PC-9 (cell line): ENCODE measurements at regions of chr7 and their contacts with region 1.

Region 1: DNA sequence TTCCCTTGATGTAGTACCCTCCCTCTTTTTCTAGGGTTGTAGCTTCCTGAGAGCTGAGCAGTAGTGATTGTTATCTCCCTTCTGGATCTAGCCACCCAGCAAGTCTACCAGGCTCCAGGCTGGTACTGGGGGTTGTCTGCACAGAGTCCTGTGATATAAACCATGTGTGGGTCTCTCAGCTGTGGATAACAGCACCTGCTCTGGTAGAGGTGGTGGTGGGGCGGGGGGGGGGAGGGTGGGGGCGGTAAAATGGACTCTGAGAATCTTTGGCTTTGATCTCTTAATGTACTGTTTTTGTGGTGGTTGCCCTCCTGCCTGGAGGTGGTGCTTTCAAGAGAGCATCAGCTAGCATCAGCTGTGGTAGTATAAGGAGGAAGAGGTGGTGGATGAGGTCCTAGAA is 302.0 kb upstream of the CHRM2 start:
- DNase-seq: no peak
- H3K4me3 ChIP-seq: no peak overlapping the region
- H3K27ac ChIP-seq: no peak overlapping the region
- H3K4me1 ChIP-seq: no peaks in the 10 kb centered on the region
- H3K27me3 ChIP-seq: no peaks in the 10 kb centered on the region
- CTCF ChIP-seq: no peak

Region 2: DNA sequence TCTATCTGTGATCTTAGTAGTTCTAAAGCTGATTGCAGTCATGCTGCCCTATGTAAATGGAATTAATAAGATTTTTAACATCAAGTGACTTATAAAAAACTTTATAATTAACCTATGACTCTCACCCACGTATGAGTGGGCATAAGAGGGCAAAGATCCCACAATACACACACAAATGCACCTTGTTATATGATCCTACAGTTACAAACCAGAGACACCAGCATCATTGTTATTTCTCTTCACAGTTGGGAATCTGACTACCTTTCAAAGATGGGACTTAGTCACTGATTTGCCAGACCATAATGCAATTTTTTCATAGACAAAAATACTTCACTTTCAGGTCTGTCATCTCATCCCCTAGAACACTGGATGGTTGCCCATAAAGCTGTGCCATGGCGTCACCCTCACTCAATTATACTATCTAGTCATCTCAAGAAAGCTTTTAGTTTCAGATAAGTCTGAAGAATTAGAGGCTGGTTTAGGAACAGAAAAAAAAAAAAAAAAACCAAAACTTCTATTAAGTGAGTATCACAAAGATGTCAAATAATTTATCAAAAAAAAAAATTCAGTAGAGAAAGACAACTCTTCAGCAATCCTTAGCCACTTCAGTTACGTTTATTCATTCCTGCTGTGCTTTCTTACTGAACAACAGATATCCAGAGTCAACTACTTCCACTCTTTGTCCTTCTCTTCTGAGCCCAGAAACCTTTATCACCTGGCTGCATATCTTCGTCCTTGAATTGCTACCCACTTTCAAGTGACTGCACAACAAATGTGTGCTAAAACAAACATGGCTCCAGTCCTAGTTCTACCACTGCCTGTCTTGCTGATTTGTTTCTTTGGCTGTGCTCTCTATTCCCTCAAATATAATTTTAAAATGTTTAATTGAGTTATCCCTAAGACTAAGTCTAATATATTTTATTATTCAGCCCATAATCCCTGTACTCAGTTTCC is 127.0 kb after region 1 on chr7:
- CTCF ChIA-PET with region 1: no interaction called
- POLR2A ChIA-PET with region 1: interaction called, 14 read pairs
- intact Hi-C with region 1: no loop called
- DNase-seq: no peak
- H3K4me3 ChIP-seq: no peak overlapping the region
- H3K27ac ChIP-seq: no peak overlapping the region
- H3K4me1 ChIP-seq: no peaks in the 10 kb centered on the region
- H3K27me3 ChIP-seq: 0 out of 2 replicates have a peak, but pooled peaks cover 4% of the 10 kb centered on the region
- CTCF ChIP-seq: no peak